ENCODE measurements at regions of chr19 and their contacts with region 1.

Region 1: GRCh38 chr19:37334179-37335071 is 36.5 kb upstream of the ZNF527 start:
- DNase-seq: peak; percentile 97

Region 2: DNA sequence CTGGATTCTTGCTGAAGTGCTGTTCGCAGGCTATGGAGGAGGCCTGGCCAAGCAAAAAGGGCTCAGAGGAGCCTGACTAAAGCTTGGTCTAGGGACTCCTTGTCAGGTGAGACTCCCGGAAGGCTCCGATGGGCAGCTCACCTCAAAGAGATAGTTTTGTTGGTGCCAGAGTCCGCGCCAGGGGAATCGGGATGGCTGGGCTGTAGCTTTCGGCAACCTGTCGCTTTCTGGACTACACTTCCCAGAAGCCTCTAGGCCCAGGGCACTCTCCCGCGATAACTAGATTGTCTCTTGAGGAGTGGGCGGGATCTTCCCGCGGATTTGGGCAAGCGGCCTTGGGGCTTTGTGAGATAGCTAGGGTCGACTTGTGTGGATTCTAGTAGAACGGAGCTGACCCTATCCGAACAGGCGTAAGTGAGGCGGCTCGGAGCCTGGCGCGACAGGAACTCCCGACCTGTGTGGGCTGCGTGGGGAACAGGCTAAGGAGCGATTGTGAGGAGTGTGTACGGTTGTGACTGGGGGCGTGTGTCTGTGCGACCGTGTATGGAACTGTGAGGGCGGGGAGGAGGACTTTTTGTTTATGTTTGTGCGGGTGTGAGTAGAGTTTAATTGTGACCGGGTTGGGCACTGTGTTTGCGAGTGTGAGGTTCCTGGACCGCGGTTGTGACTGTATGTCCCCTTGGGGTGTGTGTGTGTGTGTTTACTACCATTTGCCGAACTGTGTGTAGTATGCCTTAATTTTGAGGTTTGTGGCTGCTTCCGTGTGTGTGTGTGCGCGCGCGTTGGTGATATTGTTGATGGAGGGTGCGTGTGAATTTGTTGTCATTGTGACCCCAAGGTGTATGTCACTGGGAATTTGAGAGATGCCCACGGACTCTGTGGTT is 483.6 kb before region 1 on chr19 and contains the start of gene ZNF345:
- intact Hi-C with region 1: loop called in 1 of 2 experiments (anchors 5 kb)
- DNase-seq: peak; percentile 95
- total RNA-seq, gene ZNF345: 5.3 to 6.6 TPM

Measured in posterior vena cava (tissue), 2 donors.